ENCODE measurements at regions of chr11 and their contacts with region 1.

Region 1: DNA sequence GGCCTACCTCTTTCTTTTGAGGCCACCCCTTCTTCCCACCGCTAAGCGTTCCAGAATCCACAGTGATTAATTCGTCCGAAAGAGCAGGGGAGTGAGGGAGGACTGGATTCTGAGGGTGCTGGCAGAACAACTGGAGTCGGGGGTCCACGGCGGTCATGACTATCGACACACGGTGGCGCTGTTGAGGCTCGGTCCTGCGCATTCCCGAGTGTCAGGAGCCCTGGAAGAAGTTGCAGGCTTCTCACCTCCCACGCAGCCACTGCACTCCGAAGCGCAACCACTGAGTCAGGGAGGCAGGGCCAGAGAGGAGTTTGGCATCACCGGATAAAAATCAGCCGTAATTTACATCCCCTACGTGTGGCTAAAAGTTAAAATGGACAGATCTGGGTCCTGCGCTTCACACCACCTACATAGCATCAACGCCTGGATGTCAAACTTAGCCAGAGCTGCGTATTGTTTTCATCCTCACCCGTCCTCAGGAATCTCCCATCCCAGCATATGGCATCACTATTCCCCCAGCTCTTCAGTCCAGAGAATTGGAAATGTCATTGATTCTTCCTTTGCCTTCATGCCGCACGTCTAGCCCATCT is 10.7 kb upstream of the CTSF start:
- DNase-seq: peak; percentile 52 to 74 (median 73)
- H3K4me3 ChIP-seq: no peak overlapping the region
- H3K4me3 Mint-ChIP-seq: peak overlapping the region in 1 of 2 donors; percentile 22
- H3K27ac ChIP-seq: no peak overlapping the region
- H3K27ac Mint-ChIP-seq: no peak overlapping the region
- H3K4me1 ChIP-seq: peaks cover 0 to 4% of the 10 kb centered on the region in 2 donors
- H3K4me1 Mint-ChIP-seq: peaks cover 7% of the 10 kb centered on the region
- H3K27me3 ChIP-seq: no peaks in the 10 kb centered on the region
- H3K27me3 Mint-ChIP-seq: peaks cover 10 to 21% (median 15%) of the 10 kb centered on the region in 3 donors
- CTCF ChIP-seq: peak; percentile 75

Region 2: GRCh38 chr11:66835768-66836405 is 256.8 kb after region 1 on chr11:
- intact Hi-C with region 1: loop called (anchors 2 to 10 kb)
- DNase-seq: no peak
- H3K4me3 ChIP-seq: no peak overlapping the region
- H3K4me3 Mint-ChIP-seq: no peak overlapping the region
- H3K27ac ChIP-seq: no peak overlapping the region
- H3K27ac Mint-ChIP-seq: peak overlapping the region in 2 of 7 donors; percentile 30 to 66
- H3K4me1 ChIP-seq: no peaks in the 10 kb centered on the region
- H3K4me1 Mint-ChIP-seq: peaks cover 14% of the 10 kb centered on the region
- H3K27me3 ChIP-seq: no peaks in the 10 kb centered on the region
- H3K27me3 Mint-ChIP-seq: peaks cover 0 to 4% (median 0%) of the 10 kb centered on the region in 3 donors
- CTCF ChIP-seq: no peak

Measured in CD14-positive monocyte (primary cell).